GM23248 (cell line): ENCODE measurements at regions of chr10 and their contacts with region 1.

Region 1: DNA sequence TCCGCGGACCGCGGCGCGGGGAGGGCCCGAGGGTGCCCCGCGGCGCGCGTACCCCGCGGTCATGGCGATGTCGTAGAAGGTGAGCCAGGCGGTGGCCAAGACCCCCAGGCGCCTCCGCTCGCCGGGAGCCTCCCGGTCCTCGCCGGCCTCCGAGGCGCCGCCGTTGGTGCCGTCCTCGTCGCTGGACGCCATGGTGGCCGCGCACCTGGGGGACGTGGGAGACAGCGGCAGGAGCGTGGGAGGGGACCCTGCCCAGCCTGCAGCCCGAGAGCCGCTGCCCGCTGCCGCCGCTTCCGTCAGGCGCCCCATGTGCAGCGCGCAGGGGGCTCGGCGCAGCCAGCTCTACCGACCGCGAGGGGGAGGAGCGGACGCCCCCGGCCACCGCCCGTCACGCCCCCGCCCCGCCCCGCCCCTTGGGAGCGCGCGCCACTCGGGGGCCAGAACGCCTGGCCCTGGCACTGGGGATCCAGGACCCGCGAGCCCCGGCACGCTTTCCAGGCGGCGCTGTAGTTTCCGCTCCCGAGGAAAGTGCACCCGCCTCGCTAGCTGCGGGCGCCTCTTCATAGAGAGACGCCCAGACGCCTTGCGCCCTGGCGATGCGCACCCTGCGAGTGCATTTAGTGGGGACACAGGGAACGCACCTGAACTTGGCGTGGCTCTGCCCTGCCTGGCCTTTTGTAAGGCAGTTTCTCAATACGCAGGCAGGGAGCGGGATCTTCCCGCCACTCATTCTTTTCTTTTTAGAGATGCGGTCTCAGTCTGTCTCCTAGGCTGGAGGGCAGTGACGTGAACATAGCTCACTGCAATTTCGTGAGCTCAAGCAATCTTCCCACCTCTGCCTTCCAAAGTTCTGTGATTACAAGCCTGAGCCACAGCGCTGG is at the start of gene HACD1:
- DNase-seq: peak; percentile 87
- H3K4me3 ChIP-seq: peak within 1 kb of the TSS; percentile 81
- H3K27ac ChIP-seq: peak within 1 kb of the TSS; percentile 77
- H3K4me1 ChIP-seq: peaks cover 7% of the 10 kb centered on the region
- H3K27me3 ChIP-seq: no peaks in the 10 kb centered on the region
- total RNA-seq, gene HACD1: 64.0 and 81.3 TPM in 2 replicates

Region 2: GRCh38 chr10:17737027-17737965 is 120.0 kb after region 1 on chr10:
- in situ Hi-C with region 1: no loop called
- DNase-seq: peak; percentile 65
- H3K4me3 ChIP-seq: no peak overlapping the region
- H3K27ac ChIP-seq: no peak overlapping the region
- H3K4me1 ChIP-seq: no peaks in the 10 kb centered on the region
- H3K27me3 ChIP-seq: no peaks in the 10 kb centered on the region

Region 3: DNA sequence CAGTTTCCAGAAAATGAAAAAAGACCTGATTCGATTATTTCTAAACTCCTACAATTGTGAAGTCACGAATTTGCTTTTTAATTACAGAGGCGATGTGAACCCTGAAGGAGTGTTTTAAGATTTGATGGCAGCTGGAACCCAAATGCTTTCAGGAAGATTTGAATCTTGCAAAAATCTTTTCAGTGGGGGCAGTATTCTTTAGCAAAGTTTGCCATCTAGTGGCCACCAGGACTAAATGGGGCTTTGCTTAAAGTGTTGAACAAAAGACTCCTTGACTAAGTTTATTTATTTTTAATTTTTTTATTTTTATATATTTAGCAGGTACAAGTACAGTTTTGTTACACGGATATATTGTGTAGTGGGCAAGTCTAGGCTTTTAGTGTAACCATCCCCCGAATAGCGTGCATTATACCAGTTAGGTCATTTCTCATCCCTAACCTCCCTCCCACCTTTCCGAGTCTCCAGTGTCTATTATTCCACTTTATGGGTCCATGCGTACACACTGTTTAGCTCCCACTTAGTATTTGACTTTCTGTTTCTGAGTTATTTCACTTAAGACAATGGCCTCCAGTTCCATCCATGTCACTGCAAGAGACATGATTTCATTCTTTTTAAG is 621.7 kb after region 1 on chr10:
- in situ Hi-C with region 1: loop called (anchors 25 kb)
- DNase-seq: peak; percentile 78
- H3K4me3 ChIP-seq: no peak overlapping the region
- H3K27ac ChIP-seq: no peak overlapping the region
- H3K4me1 ChIP-seq: peaks cover 5% of the 10 kb centered on the region; the same call in 1 of the 2 replicates
- H3K27me3 ChIP-seq: no peaks in the 10 kb centered on the region